GM18951 (cell line): ENCODE measurements at regions of chr17 and their contacts with region 1.

Region 1: GRCh38 chr17:31008374-31009041 is 37.7 kb downstream of the RNF135 start:
- POLR2A ChIP-seq: peak; percentile 59

Region 2: DNA sequence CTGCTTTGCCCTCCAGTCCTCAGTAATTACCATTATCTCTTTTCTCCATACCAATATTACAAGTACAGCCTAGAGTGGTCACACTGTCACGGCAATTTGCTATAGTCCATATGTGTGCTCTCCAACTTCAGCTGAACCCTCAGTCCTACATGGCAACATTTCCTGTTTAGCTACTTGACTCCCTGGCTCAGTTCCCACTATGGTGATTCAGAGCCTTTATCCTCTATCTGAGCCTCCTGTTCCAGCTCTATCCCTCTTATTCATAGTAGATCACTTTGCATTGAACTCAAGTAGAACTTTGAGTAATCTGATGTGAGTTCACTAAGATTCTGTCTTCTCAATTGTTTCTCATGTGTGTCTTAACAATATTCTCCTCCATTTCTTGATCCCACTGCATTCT is 575.0 kb before region 1 on chr17:
- in situ Hi-C with region 1: no loop called
- POLR2A ChIP-seq: no peak

Region 3: GRCh38 chr17:31373150-31374093 is 364.9 kb after region 1 on chr17:
- in situ Hi-C with region 1: loop called (anchors 25 kb)
- POLR2A ChIP-seq: no peak

Region 4: GRCh38 chr17:31549525-31550388 is 541.2 kb after region 1 on chr17:
- in situ Hi-C with region 1: loop called (anchors 25 kb)
- POLR2A ChIP-seq: peak; percentile 78